ENCODE measurements at regions of chr1 and their contacts with region 1.

Region 1: DNA sequence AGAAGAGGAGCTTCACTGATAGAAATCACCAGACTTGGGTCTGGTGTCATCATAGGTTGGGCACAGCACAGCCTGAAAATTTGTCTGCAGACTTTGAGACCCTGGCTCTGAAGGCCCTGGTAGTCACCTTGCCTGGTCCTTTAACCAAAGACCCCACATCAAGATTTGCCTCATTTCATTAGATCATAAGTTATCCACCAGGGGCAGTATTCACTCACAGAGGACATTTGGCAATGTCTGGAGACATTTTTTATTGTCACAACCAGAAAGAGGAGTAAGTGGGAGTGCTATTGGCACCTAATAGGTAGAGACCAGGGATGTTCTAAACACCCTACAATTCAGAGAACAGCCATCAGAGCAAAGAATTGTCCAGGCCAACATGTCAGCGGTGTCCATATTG is 22.1 kb upstream of the PAX7 start:
- DNase-seq: no peak
- ATAC-seq: no peak
- H3K4me3 ChIP-seq: no peak overlapping the region
- H3K27ac ChIP-seq: no peak overlapping the region
- H3K4me1 ChIP-seq: no peaks in the 10 kb centered on the region
- H3K27me3 ChIP-seq: peaks cover 16% of the 10 kb centered on the region
- CTCF ChIP-seq: no peak

Region 2: DNA sequence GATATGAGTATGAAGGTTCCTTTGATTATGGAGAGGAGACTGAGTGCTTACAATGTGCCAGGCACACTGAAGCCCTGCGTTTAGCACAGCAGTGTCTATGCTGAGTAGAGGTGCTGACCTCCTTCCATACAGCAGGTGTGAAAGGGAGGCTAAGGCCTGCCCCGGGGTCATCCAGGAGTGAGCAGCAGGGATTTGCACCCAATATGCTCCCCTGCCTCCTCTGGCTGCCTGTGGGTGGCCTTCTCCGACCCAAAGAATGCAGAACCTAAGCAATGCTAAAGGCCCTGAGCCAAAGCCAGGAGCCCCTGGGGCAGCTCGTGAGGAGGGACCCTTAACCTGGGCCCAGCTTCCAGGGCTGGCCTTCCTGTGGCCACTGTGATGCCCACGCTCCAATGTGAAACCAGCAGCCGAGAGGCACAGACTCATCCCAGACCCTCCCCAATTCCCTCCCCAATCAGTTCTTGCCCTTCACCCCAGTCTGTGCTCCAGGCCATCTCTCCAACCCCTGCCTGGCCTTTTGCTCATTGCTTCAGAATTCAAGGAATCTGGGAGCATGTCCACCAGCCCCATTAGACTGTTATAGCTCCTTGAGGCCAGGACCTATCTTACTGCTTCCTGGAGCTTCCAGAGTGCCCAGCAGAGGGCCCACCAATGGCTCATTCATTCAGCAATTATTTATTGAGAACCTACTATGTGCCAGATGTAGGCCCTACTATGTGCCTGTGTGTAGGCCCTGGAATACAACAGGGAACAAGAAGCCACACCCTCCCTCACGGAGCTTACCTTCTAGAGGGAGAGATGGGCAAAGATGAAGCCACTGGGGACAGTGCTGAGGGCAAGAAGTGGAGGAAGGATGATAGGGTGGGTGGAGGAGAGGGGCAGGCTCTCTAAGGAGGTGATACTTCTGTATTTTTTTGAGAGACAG is 197.7 kb after region 1 on chr1:
- intact Hi-C with region 1: loop called (anchors 10 kb)
- DNase-seq: no peak
- ATAC-seq: no peak
- H3K4me3 ChIP-seq: no peak overlapping the region
- H3K27ac ChIP-seq: no peak overlapping the region
- H3K4me1 ChIP-seq: no peaks in the 10 kb centered on the region
- H3K27me3 ChIP-seq: peaks cover 12% of the 10 kb centered on the region
- CTCF ChIP-seq: no peak

Measured in upper lobe of right lung (tissue), 1 donor.